ENCODE measurements at regions of chr2 and their contacts with region 1.

Region 1: DNA sequence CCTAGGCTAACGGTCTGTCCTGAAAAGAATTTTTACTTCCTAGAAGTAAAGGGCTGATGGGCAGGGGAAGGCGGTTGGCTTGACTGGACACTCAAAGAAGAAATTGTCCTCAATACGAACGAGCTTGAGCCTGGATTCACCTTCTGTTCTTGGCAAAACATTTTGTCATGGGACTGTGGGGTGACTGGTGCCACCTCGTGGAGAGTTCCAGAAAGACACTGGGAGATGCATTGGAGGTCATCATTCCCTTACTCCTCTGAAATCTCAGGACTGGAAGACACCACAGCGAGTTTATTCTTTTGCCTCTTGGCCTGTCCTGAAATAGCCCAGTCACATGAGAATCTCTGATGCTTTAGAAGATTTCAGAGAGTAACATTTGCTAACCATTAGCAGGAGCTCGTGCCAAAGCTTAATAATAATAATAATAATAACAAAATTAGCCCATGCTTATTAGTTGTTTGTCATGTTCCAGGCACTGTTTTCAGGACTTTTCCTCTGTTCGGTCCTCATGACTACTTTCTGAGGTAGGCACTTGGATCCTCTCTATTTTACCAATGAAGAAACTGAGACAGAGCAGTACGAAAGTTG is 44.5 kb downstream of the TMEM182 start:
- DNase-seq: peak; percentile 79
- H3K4me3 ChIP-seq: no peak overlapping the region
- H3K27ac ChIP-seq: no peak overlapping the region
- H3K4me1 ChIP-seq: no peaks in the 10 kb centered on the region
- H3K27me3 ChIP-seq: no peaks in the 10 kb centered on the region
- CTCF ChIP-seq: peak; percentile 83 to 88
- POLR2A ChIP-seq: no peak

Region 2: GRCh38 chr2:102520028-102520427 is 286.3 kb before region 1 on chr2:
- CTCF ChIA-PET with region 1: no interaction called
- POLR2A ChIA-PET with region 1: no interaction called
- dilution Hi-C with region 1: no loop called
- intact Hi-C with region 1: loop called (anchors 2 kb)
- DNase-seq: peak; percentile 24
- H3K4me3 ChIP-seq: no peak overlapping the region
- H3K27ac ChIP-seq: no peak overlapping the region
- H3K4me1 ChIP-seq: no peaks in the 10 kb centered on the region
- H3K27me3 ChIP-seq: peaks cover 0 to under 1% of the 10 kb centered on the region in 2 experiments
- CTCF ChIP-seq: peak; percentile 54 to 66
- POLR2A ChIP-seq: no peak

Region 3: GRCh38 chr2:102761763-102762162 is 44.6 kb before region 1 on chr2 and contains the start of gene TMEM182:
- CTCF ChIA-PET with region 1: interaction called, 311 read pairs
- POLR2A ChIA-PET with region 1: no interaction called
- dilution Hi-C with region 1: no loop called
- intact Hi-C with region 1: no loop called
- DNase-seq: no peak
- H3K4me3 ChIP-seq: no peak within 1 kb of the TSS
- H3K27ac ChIP-seq: no peak within 1 kb of the TSS
- H3K4me1 ChIP-seq: peaks cover 2% of the 10 kb centered on the region
- H3K27me3 ChIP-seq: no peaks in the 10 kb centered on the region
- CTCF ChIP-seq: no peak
- POLR2A ChIP-seq: no peak
- total RNA-seq, gene TMEM182: 0.81 and 0.95 TPM in 2 replicates